ENCODE measurements at regions of chr20 and their contacts with region 1.

Region 1: DNA sequence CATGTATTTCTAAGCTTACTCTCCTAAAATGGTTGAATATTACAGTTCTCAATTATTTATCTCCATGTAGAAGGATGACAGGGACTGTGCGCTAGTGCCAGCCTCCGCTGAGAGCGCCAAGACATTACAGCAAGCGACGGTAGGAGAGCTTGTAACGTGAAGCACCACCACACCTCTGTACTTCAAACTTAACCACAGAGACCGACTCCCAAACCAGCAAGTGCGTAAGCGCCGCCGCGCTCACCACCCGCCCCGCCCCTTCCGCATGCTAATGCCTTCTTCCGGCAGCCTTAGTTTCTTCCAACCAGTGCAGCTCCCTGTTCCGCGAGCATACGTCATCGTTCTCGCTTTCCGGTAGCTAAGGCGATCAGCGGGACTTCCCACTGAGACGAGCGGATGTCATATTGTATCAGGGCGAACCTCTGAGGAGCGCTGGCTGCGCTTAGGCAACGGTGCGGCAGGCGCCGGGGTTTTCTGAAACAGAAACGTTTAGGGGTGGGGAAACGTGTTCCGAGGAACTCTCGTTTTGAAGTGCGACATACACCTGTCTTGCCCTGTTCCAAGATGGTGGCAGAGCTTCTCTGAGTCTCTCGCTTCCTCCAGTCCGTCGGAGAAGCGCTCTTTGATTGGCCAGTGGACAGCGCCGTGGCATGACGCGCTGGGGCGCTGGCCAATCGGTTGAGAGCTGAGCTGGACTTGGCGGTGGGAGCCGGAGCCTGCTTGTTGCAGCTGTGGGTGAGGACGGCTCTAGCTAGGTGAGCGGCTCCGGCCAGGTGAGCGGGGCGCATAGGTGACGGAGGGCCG is at the start of gene SEC23B:
- DNase-seq: peak; percentile 99
- H3K4me3 ChIP-seq: peak within 1 kb of the TSS; percentile 54 to 88 (median 76)
- H3K27ac ChIP-seq: peak within 1 kb of the TSS; percentile 90 to 95 (median 92)
- H3K4me1 ChIP-seq: peaks cover 0 to 18% (median 16%) of the 10 kb centered on the region in 4 donors
- H3K27me3 ChIP-seq: peaks cover 0 to 17% (median 0%) of the 10 kb centered on the region in 3 donors
- CTCF ChIP-seq: no peak
- EP300 ChIP-seq: peak in 1 of 4 donors; percentile 37
- POLR2A ChIP-seq: peak; percentile 86 to 89
- total RNA-seq, gene SEC23B: 10.5 to 14.2 (median 13.5) TPM

Region 2: DNA sequence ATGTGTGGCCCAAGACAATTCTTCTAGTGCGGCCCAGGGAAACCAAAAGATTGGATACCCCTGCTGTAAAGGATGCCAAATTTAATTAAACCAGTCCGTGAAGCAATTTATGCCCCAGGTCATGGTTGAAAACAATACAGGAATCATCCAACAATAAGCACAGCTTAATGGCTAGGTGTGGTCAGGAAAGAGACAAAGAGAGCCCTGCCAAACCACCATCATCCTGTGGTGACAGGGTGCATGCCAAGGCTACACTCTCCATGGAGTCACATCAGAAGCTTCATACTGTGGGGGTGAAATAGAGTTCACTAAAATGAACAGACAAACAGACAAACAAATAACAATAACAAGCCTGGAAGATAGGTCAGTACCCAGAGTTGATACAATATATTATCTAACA is 103.2 kb before region 1 on chr20:
- intact Hi-C with region 1: no loop called
- DNase-seq: no peak
- H3K4me3 ChIP-seq: no peak overlapping the region
- H3K27ac ChIP-seq: no peak overlapping the region
- H3K4me1 ChIP-seq: no peaks in the 10 kb centered on the region
- H3K27me3 ChIP-seq: no peaks in the 10 kb centered on the region
- CTCF ChIP-seq: no peak
- EP300 ChIP-seq: no peak
- POLR2A ChIP-seq: no peak

Region 3: DNA sequence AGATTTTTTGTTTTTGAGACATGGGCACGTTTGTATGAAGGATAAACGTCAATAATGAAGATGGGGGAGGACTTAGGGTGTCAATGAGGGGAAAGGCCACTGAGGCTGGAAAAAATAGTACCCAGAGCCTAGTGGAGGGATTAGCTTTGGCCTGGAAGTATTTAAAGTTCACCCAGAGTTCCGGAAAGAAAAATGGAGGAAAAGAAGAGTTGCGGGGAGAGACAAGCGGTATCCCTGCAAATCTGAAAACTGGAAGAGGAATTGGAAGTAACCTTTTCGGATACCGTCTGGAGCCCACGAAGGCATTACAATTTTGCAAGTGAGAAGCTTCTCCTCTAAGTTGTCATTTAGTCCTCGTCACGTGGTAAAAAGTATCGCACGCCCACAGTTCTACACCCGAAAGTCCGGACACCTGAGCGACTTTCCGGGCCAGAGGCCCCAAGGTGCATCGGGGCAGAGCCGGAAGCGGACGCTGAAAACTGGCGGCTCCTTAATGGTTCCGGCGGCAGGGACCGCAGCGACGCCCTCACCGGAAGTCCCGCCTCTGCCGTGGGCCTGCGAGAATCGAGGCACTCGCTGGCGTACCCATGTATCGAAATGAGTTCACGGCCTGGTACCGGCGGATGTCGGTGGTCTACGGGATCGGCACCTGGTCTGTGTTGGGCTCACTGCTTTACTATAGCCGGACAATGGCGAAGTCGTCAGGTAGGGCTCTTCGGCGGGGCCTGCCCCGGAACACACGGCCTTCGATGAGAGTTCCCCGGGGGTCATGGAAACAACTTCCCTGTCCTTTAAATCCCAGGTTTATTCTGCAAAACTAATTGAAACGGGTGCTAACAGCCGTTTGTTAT is 59.7 kb after region 1 on chr20 and contains the start of gene SMIM26:
- intact Hi-C with region 1: loop called (anchors 2 kb)
- DNase-seq: peak; percentile 97
- H3K4me3 ChIP-seq: peak within 1 kb of the TSS; percentile 56 to 68 (median 66)
- H3K27ac ChIP-seq: peak within 1 kb of the TSS; percentile 85 to 88 (median 87)
- H3K4me1 ChIP-seq: peaks cover 0 to 14% (median 12%) of the 10 kb centered on the region in 4 donors
- H3K27me3 ChIP-seq: no peaks in the 10 kb centered on the region
- CTCF ChIP-seq: no peak
- EP300 ChIP-seq: no peak
- POLR2A ChIP-seq: peak; percentile 40 to 53
- total RNA-seq, gene SMIM26: 140 to 235 (median 204) TPM